Activated CD4-positive, alpha-beta T cell treated with anti-CD3 and anti-CD28 coated beads, Interleukin-2, amount 10 ng/mL, durations not matched to agents 7 days and 5 days (primary cell): ENCODE measurements at regions of chr1 and their contacts with region 1.

Region 1: GRCh38 chr1:112660072-112660471 is 14.4 kb upstream of the MOV10 start:
- DNase-seq: no peak
- H3K4me3 Mint-ChIP-seq: no peak overlapping the region
- H3K27ac Mint-ChIP-seq: no peak overlapping the region
- H3K4me1 Mint-ChIP-seq: peaks cover 11% of the 10 kb centered on the region
- H3K27me3 Mint-ChIP-seq: no peaks in the 10 kb centered on the region

Region 2: DNA sequence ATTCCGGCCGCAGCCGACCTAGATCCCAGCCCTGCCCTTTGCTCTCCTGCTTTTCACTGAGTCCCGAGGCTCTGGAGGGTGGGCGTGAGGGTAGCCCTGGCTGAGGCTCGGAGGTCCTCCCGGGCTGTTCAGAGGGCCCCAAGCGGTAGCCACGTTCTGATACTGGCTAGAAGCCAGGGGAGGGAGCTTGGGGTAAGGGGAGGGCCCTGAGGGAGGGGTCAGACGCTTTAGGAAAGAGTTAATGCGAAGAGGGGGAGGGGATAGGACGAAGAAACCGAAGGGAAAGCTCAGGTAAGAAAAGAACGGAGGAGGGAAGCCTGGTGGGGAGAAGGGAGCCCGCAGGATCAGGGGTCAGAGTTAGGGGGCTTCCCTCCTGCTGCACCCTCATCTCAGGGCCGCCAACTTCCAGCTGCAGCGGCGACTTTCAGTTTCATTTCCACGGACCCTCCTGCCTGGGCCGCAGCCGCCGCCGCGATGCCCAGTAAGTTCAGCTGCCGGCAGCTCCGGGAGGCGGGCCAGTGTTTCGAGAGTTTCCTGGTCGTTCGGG is 14.4 kb after region 1 on chr1 and contains the start of gene MOV10:
- CTCF ChIA-PET with region 1: interaction called, 11 read pairs
- POLR2A ChIA-PET with region 1: interaction called, 3 read pairs
- DNase-seq: peak; percentile 71
- H3K4me3 Mint-ChIP-seq: peak within 1 kb of the TSS; percentile 91
- H3K27ac Mint-ChIP-seq: peak within 1 kb of the TSS; percentile 97
- H3K4me1 Mint-ChIP-seq: peaks cover 49% of the 10 kb centered on the region
- H3K27me3 Mint-ChIP-seq: no peaks in the 10 kb centered on the region
- total RNA-seq, gene MOV10: 118 to 126 TPM